GM12878 (cell line): ENCODE measurements at regions of chr19 and their contacts with region 1.

Region 1: DNA sequence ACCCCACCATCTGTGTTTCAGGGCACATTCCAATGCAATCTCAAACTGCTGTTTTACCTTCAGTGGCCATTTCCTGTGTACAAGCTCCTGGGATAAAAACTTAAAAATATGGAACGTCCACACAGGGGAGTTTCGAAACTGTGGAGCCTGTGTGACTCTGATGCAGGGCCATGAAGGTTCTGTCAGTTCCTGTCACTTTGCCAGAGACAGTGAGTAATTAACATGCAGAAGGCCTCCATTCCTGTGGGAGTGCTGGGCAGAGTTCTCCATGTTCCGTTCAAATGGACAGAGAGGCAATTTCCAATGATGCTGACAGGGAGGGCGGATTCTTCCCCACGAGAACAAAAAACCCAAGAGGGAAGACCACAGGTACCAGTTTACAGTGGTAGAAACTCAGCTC is 24.4 kb downstream of the WDR88 start:
- DNase-seq: no peak
- ATAC-seq: no peak
- H3K4me3 ChIP-seq: no peak overlapping the region
- H3K27ac ChIP-seq: no peak overlapping the region
- H3K4me1 ChIP-seq: peaks cover 10% of the 10 kb centered on the region
- H3K27me3 ChIP-seq: no peaks in the 10 kb centered on the region
- CTCF ChIP-seq: no peak
- EP300 ChIP-seq: no peak
- POLR2A ChIP-seq: no peak
- RAD21 ChIP-seq: no peak

Region 2: DNA sequence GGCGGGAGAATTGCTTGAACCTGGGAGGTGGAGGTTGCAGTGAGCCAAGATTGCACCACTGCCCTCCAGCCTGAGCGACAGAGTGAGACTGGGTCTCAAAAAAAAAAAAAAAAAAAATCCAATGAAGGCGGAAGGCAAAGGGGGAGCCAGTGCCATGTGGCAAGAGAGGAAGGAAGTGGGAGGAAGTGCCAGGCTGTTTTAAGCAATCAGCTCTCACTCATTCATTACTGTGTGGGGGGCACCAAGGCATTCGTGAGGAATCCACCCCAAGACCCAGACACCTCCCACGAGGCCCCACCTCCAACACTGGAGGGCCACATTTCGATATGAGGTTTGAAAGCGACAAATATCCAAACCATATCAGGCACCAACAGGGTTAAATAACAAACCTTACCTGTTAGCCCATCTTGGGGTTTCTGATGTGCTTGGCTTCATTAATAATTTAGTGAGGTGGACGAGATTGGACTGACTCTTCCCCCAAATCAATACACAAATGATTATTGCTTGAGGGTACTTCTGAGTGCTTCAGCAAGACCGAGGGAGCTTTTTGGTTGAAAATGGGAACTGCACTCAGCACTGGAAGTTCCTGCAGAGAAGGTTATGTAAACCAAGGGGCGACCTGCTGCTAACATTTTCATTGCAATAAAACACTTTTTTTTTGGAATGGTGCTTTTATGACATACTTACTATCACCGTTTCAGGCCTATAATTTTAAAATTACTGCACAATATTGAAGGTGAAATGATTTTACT is 30.3 kb after region 1 on chr19:
- CTCF ChIA-PET with region 1: interaction called, 12 read pairs
- POLR2A ChIA-PET with region 1: no interaction called
- RAD21 ChIA-PET with region 1: interaction called, 3 read pairs
- SMC1A ChIA-PET with region 1: interaction called, 5 read pairs
- in situ Hi-C with region 1: no loop called
- intact Hi-C with region 1: no loop called
- DNase-seq: no peak
- ATAC-seq: no peak
- H3K4me3 ChIP-seq: no peak overlapping the region
- H3K27ac ChIP-seq: no peak overlapping the region
- H3K4me1 ChIP-seq: no peaks in the 10 kb centered on the region
- H3K27me3 ChIP-seq: peaks cover 0 to 1% of the 10 kb centered on the region in 2 experiments; a peak in 1 of 4 replicates
- CTCF ChIP-seq: no peak
- EP300 ChIP-seq: no peak
- POLR2A ChIP-seq: no peak
- RAD21 ChIP-seq: no peak